Naive thymus-derived CD4-positive, alpha-beta T cell (primary cell): ENCODE measurements at regions of chr2 and their contacts with region 1.

Region 1: GRCh38 chr2:3651691-3652648 is 6.0 kb upstream of the ALLC start:
- DNase-seq: peak; percentile 29 to 87 (median 77)
- ATAC-seq: peak; percentile 74
- H3K4me3 ChIP-seq: peak overlapping the region; percentile 73
- H3K4me3 Mint-ChIP-seq: peak overlapping the region; percentile 78 to 94 (median 87)
- H3K27ac ChIP-seq: peak overlapping the region; percentile 4
- H3K27ac Mint-ChIP-seq: peak overlapping the region; percentile 58 to 98 (median 90)
- H3K4me1 ChIP-seq: no peaks in the 10 kb centered on the region
- H3K4me1 Mint-ChIP-seq: peaks cover 5 to 18% (median 9%) of the 10 kb centered on the region in 7 donors
- H3K27me3 ChIP-seq: no peaks in the 10 kb centered on the region
- H3K27me3 Mint-ChIP-seq: no peaks in the 10 kb centered on the region

Region 2: GRCh38 chr2:1900736-1901135 is 1751.2 kb before region 1 on chr2:
- CTCF ChIA-PET with region 1: no interaction called
- POLR2A ChIA-PET with region 1: no interaction called
- intact Hi-C with region 1: loop called in 1 of 2 experiments (anchors 2 kb)
- DNase-seq: no peak
- ATAC-seq: no peak
- H3K4me3 ChIP-seq: no peak overlapping the region
- H3K4me3 Mint-ChIP-seq: no peak overlapping the region
- H3K27ac ChIP-seq: no peak overlapping the region
- H3K27ac Mint-ChIP-seq: no peak overlapping the region
- H3K4me1 ChIP-seq: no peaks in the 10 kb centered on the region
- H3K4me1 Mint-ChIP-seq: no peaks in the 10 kb centered on the region
- H3K27me3 ChIP-seq: no peaks in the 10 kb centered on the region
- H3K27me3 Mint-ChIP-seq: peaks cover 0 to 9% (median 3%) of the 10 kb centered on the region in 5 donors

Region 3: DNA sequence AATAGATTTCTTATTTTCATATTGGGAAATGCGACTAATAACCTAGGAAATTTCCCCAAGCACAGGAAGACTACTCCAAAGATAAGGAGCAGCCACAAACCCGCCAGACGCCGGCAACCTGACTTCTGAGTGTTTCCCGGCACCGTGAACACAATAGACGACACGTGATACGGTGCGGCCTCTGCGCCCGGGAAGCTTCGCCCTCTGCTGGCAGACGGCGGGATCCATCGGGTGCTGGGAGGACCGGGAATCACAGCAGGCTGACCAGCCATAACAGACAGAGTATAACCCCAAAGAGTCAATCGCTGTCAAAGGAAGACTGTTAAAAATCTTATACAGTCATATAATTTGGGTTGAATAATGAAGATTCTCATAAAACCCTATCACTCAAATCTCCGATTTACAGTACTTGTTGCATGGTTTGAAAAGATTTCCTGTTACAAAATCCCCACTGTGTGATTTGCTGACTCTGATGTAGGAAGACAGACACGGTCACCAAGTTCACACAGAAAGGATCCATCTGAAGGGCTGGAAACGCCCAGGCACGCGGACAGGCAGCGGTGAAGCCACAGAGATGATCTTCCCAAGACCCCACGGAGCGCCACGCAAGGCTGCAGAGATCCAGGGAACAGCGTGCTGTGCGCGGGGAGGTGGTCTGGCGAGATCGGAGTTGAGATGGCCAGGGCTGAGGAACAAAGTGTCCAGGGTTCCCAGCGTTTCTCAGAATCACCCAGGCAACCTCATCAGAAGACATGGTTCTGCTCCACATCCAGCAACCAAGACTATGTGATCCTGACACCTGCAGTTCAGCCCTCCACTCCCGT is 348.2 kb before region 1 on chr2:
- CTCF ChIA-PET with region 1: interaction called, 3 read pairs
- POLR2A ChIA-PET with region 1: no interaction called
- intact Hi-C with region 1: loop called in 1 of 2 experiments (anchors 1 kb)
- DNase-seq: peak; percentile 40 to 83 (median 70)
- ATAC-seq: peak; percentile 94
- H3K4me3 ChIP-seq: no peak overlapping the region
- H3K4me3 Mint-ChIP-seq: peak overlapping the region in 6 of 10 donors; percentile 18 to 65 (median 34)
- H3K27ac ChIP-seq: no peak overlapping the region
- H3K27ac Mint-ChIP-seq: peak overlapping the region in 6 of 9 donors; percentile 34 to 71 (median 68)
- H3K4me1 ChIP-seq: peaks cover 3 to 4% of the 10 kb centered on the region in 2 donors
- H3K4me1 Mint-ChIP-seq: peaks cover 9 to 31% (median 26%) of the 10 kb centered on the region in 7 donors
- H3K27me3 ChIP-seq: no peaks in the 10 kb centered on the region
- H3K27me3 Mint-ChIP-seq: no peaks in the 10 kb centered on the region

Region 4: GRCh38 chr2:3461801-3462492 is 190.0 kb before region 1 on chr2:
- CTCF ChIA-PET with region 1: interaction called, 13 read pairs
- POLR2A ChIA-PET with region 1: no interaction called
- intact Hi-C with region 1: loop called in 1 of 2 experiments (anchors 1 kb)
- DNase-seq: peak in 6 of 9 donors; percentile 27 to 64 (median 52)
- ATAC-seq: peak; percentile 80
- H3K4me3 ChIP-seq: no peak overlapping the region
- H3K4me3 Mint-ChIP-seq: peak overlapping the region in 7 of 10 donors; percentile 39 to 75 (median 51)
- H3K27ac ChIP-seq: peak overlapping the region; percentile 49
- H3K27ac Mint-ChIP-seq: peak overlapping the region in 8 of 9 donors; percentile 38 to 89 (median 77)
- H3K4me1 ChIP-seq: peaks cover 0 to 5% of the 10 kb centered on the region in 2 donors
- H3K4me1 Mint-ChIP-seq: peaks cover 4 to 25% (median 14%) of the 10 kb centered on the region in 7 donors
- H3K27me3 ChIP-seq: no peaks in the 10 kb centered on the region
- H3K27me3 Mint-ChIP-seq: no peaks in the 10 kb centered on the region

Region 5: GRCh38 chr2:3558205-3559014 is 93.6 kb before region 1 on chr2 and contains the start of gene RNASEH1:
- CTCF ChIA-PET with region 1: interaction called, 5 read pairs
- POLR2A ChIA-PET with region 1: interaction called, 8 read pairs
- intact Hi-C with region 1: loop called (anchors 1 kb)
- DNase-seq: peak; percentile 94 to 100 (median 97)
- ATAC-seq: peak; percentile 98
- H3K4me3 ChIP-seq: peak within 1 kb of the TSS; percentile 72
- H3K4me3 Mint-ChIP-seq: peak within 1 kb of the TSS; percentile 86 to 93 (median 92)
- H3K27ac ChIP-seq: peak within 1 kb of the TSS; percentile 98
- H3K27ac Mint-ChIP-seq: peak within 1 kb of the TSS; percentile 90 to 98 (median 96)
- H3K4me1 ChIP-seq: peaks cover 11 to 17% of the 10 kb centered on the region in 2 donors
- H3K4me1 Mint-ChIP-seq: peaks cover 7 to 48% (median 37%) of the 10 kb centered on the region in 7 donors
- H3K27me3 ChIP-seq: no peaks in the 10 kb centered on the region
- H3K27me3 Mint-ChIP-seq: no peaks in the 10 kb centered on the region
- total RNA-seq, gene RNASEH1: 17.6 to 31.2 (median 23.4) TPM